Left ventricle myocardium inferior (tissue), 1 donor: ENCODE measurements at regions of chr5 and their contacts with region 1.

Region 1: GRCh38 chr5:128667152-128667551 is 129.1 kb upstream of the FBN2 start:
- DNase-seq: no peak
- H3K4me3 ChIP-seq: no peak overlapping the region
- H3K27ac ChIP-seq: no peak overlapping the region
- H3K4me1 ChIP-seq: no peaks in the 10 kb centered on the region
- H3K27me3 ChIP-seq: no peaks in the 10 kb centered on the region
- CTCF ChIP-seq: peak; percentile 48

Region 2: DNA sequence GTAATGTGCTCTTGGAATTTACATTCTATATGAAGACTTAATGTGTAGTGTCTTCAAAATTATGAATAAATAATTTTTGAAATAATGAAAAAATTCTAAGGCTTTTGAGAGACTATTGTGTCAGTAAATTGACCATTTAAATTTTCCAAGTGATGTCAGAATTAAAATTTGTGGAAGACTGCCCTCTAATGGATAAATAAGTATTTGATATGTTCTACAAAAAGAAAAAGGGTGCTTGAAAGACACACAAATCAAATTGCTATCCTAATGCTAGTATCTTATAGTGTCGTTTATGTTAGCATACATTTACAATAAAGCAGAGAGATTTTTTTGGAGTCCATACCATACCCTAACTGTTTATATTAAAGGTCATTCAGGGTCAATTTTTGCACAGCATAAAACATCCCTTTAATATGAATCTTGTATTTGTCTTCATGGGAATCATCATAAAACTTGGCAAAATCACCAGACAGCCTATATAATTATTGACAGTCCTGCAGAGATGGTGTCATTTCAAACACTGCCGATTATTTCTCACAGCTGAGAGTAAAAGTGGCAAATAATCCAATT is 177.3 kb after region 1 on chr5:
- intact Hi-C with region 1: loop called (anchors 10 kb)
- DNase-seq: no peak
- H3K4me3 ChIP-seq: no peak overlapping the region
- H3K27ac ChIP-seq: no peak overlapping the region
- H3K4me1 ChIP-seq: no peaks in the 10 kb centered on the region
- H3K27me3 ChIP-seq: no peaks in the 10 kb centered on the region
- CTCF ChIP-seq: peak; percentile 55

Region 3: GRCh38 chr5:129884322-129884721 is 1217.2 kb after region 1 on chr5:
- intact Hi-C with region 1: no loop called
- DNase-seq: no peak
- H3K4me3 ChIP-seq: no peak overlapping the region
- H3K27ac ChIP-seq: no peak overlapping the region
- H3K4me1 ChIP-seq: no peaks in the 10 kb centered on the region
- H3K27me3 ChIP-seq: no peaks in the 10 kb centered on the region
- CTCF ChIP-seq: no peak